ENCODE measurements at regions of chr12 and their contacts with region 1.

Region 1: GRCh38 chr12:53295070-53295890 is at the start of gene PFDN5:
- DNase-seq: peak; percentile 75
- ATAC-seq: peak; percentile 89
- H3K4me3 Mint-ChIP-seq: peak within 1 kb of the TSS; percentile 99
- H3K27ac Mint-ChIP-seq: peak within 1 kb of the TSS; percentile 97
- H3K4me1 Mint-ChIP-seq: peaks cover 48% of the 10 kb centered on the region
- H3K27me3 Mint-ChIP-seq: no peaks in the 10 kb centered on the region
- CTCF ChIP-seq: no peak
- total RNA-seq, gene PFDN5: 486 and 578 TPM in 2 replicates

Region 2: GRCh38 chr12:53005986-53006809 is 289.1 kb before region 1 on chr12 and contains the start of gene EIF4B:
- CTCF ChIA-PET with region 1: no interaction called
- POLR2A ChIA-PET with region 1: no interaction called
- intact Hi-C with region 1: loop called (anchors 1 kb)
- DNase-seq: peak; percentile 97
- ATAC-seq: peak; percentile 90
- H3K4me3 Mint-ChIP-seq: peak within 1 kb of the TSS; percentile 98
- H3K27ac Mint-ChIP-seq: peak within 1 kb of the TSS; percentile 98
- H3K4me1 Mint-ChIP-seq: peaks cover 51% of the 10 kb centered on the region
- H3K27me3 Mint-ChIP-seq: peaks cover 1% of the 10 kb centered on the region
- CTCF ChIP-seq: no peak
- total RNA-seq, gene EIF4B: 726 and 733 TPM in 2 replicates

Region 3: DNA sequence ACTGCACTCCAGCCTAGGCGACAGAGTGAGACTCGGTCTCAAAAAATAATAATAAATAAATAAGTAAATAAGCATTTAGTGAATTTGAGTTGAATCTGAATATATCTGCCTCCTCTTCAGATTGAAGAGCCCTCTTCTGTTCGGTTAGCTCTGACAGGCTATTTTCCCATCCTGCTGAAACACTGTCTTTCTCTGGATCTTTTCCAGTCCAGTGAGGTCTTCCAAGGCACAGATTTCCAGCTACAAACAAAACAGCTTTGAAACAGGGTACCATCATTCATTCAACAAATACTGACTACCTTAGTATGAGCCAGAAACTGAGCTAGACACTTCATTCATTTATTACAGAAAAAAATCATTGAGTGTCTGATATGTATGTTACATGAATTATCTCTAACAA is 208.9 kb before region 1 on chr12:
- CTCF ChIA-PET with region 1: no interaction called
- POLR2A ChIA-PET with region 1: no interaction called
- intact Hi-C with region 1: no loop called
- DNase-seq: no peak
- ATAC-seq: no peak
- H3K4me3 Mint-ChIP-seq: no peak overlapping the region
- H3K27ac Mint-ChIP-seq: no peak overlapping the region
- H3K4me1 Mint-ChIP-seq: no peaks in the 10 kb centered on the region
- H3K27me3 Mint-ChIP-seq: peaks cover 22% of the 10 kb centered on the region
- CTCF ChIP-seq: no peak

Region 4: DNA sequence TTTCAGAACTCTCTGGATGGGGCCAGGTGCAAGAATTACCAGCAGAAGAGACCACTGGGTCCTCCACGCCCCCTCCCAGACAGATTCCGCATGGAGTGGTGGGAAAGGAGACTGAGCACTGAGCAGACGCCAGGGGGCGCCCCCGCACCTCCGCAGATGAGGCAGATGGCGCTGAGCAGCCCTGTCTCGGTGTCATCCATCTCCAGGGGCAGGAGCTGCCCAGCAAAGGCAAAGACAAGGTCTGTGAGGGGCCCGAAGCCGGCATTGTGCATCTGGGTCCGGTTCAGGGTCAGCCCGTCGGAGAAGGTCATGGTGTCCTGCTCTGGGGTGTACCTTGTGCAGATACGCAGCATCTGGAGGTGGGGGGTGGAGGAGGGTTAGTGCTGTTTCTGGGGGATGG is 81.9 kb before region 1 on chr12:
- CTCF ChIA-PET with region 1: interaction called, 298 read pairs
- POLR2A ChIA-PET with region 1: interaction called, 33 read pairs
- intact Hi-C with region 1: no loop called
- DNase-seq: peak; percentile 82
- ATAC-seq: peak; percentile 75
- H3K4me3 Mint-ChIP-seq: no peak overlapping the region
- H3K27ac Mint-ChIP-seq: peak overlapping the region; percentile 6
- H3K4me1 Mint-ChIP-seq: peaks cover 76% of the 10 kb centered on the region
- H3K27me3 Mint-ChIP-seq: no peaks in the 10 kb centered on the region
- CTCF ChIP-seq: peak; percentile 49

Region 5: GRCh38 chr12:53251477-53252348 is 43.6 kb before region 1 on chr12:
- CTCF ChIA-PET with region 1: interaction called, 3 read pairs
- POLR2A ChIA-PET with region 1: interaction called, 6 read pairs
- intact Hi-C with region 1: loop called (anchors 2 kb)
- DNase-seq: peak; percentile 77
- ATAC-seq: peak; percentile 76
- H3K4me3 Mint-ChIP-seq: peak overlapping the region; percentile 98
- H3K27ac Mint-ChIP-seq: peak overlapping the region; percentile 90
- H3K4me1 Mint-ChIP-seq: peaks cover 49% of the 10 kb centered on the region
- H3K27me3 Mint-ChIP-seq: no peaks in the 10 kb centered on the region
- CTCF ChIP-seq: no peak

Region 6: DNA sequence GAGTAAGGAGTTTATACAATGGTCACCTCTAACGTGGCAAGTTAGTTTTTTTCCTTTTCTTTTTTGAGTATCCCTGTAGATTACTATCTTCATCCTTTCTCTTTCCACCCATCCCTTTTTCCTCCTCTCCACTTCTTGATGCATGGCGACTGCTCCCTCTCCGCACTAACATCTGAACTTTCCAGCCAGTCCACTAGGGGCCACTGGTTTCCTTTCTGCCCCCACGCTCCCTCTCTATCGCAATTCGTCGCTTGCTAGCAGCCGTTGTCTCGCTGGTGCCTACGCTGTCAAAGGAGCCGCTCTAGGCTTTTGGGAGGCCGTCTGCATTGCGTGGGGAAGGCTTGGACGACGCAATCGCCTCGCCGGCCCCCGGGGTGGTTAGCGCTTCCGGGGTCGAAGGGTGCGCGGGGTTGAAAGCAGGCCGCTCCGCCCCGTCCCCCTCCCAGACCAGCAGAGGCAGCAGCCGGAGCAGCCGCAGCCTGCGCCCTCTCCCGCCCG is 156.4 kb after region 1 on chr12 and contains the start of gene PCBP2:
- CTCF ChIA-PET with region 1: no interaction called
- POLR2A ChIA-PET with region 1: no interaction called
- intact Hi-C with region 1: loop called (anchors 1 kb)
- DNase-seq: peak; percentile 92
- ATAC-seq: peak; percentile 92
- H3K4me3 Mint-ChIP-seq: peak within 1 kb of the TSS; percentile 99
- H3K27ac Mint-ChIP-seq: peak within 1 kb of the TSS; percentile 99
- H3K4me1 Mint-ChIP-seq: peaks cover 30% of the 10 kb centered on the region
- H3K27me3 Mint-ChIP-seq: no peaks in the 10 kb centered on the region
- CTCF ChIP-seq: no peak
- total RNA-seq, gene PCBP2: 841 and 853 TPM in 2 replicates